ENCODE measurements at regions of chr3 and their contacts with region 1.

Region 1: DNA sequence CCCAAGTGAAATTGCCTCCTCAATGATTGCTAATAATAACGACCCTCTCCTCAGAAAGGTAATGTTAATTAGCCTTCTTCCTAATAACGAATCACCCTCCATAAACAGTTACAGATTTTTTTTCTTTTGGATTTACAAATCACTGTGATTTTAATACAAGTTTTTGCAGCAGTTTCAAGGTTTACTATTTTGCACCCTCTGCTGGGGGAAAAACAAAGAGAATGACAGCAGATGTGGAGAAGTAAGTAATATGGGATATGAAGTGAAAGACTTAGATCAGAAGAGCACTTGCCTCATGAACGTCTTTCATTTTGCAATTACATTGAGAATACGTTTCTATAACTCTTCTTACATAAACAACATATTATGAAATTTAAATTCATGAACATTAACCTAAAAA is 16.1 kb upstream of the CNTN3 start:
- DNase-seq: peak; percentile 59
- ATAC-seq: peak; percentile 47; the same call in 1 of the 2 replicates
- H3K4me3 ChIP-seq: no peak overlapping the region
- H3K27ac ChIP-seq: no peak overlapping the region
- H3K4me1 ChIP-seq: peaks cover 4% of the 10 kb centered on the region; the same call in 1 of the 2 replicates
- H3K27me3 ChIP-seq: no peaks in the 10 kb centered on the region
- CTCF ChIP-seq: peak; percentile 55
- POLR2A ChIP-seq: no peak
- RAD21 ChIP-seq: peak; percentile 54

Region 2: DNA sequence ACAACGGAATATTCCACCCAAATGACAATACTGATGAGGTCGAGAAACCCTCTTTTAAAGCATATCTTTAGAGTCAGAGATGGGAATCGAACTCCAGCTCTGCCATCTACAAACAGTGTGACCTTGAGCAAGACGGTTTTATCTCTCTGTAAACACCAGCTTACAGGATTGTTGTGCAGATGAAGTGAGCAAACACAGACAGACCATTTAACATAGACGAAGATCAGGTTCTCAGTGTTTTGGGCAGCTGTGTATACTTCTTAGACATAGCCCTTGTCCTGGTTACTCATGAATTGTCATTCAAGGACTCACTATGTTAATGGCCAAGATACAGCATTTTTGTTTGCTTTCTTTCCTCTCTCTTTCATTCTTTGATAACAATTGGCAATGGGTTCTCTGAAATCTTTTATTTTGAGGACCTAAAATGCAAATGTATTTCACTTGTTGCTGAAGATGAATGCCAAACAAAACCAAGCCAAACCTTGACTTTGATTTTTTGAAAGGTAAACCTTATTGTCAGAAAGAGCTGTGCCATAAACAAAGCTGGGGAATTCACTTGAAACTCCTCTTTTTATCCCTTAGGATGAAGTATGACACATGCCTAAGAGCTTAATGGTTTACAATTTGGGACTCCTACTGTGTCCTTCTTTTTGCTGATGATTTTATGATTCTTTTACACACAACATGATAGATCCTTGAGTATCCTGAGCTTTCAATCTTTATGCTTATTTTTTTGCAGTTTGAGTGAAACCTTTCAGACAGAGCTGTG is 755.8 kb before region 1 on chr3:
- CTCF ChIA-PET with region 1: no interaction called
- POLR2A ChIA-PET with region 1: no interaction called
- dilution Hi-C with region 1: no loop called
- in situ Hi-C with region 1: no loop called
- intact Hi-C with region 1: loop called (anchors 5 kb)
- DNase-seq: no peak
- ATAC-seq: no peak
- H3K4me3 ChIP-seq: no peak overlapping the region
- H3K27ac ChIP-seq: no peak overlapping the region
- H3K4me1 ChIP-seq: no peaks in the 10 kb centered on the region
- H3K27me3 ChIP-seq: peaks cover 1% of the 10 kb centered on the region; the same call in 1 of the 2 replicates
- CTCF ChIP-seq: no peak
- POLR2A ChIP-seq: no peak
- RAD21 ChIP-seq: no peak

Region 3: DNA sequence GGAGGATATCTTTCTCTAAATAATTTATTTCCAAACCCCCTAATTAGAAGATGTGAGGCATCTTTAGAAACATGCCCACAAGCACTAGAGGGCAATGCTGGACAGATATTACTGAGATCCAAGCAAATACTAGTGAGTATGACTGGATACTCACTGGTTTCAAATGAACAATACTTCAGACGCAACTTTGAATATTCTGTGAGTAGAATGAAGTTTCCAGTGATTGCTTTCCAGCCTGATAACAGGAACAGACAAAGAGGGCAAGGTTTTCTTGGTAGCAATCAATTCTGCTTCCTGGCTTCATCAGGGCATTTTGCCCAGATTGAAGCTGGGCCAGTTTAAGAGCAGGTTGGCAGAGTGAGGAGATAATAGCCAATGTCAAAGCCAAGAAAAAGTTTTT is 563.3 kb before region 1 on chr3:
- CTCF ChIA-PET with region 1: no interaction called
- POLR2A ChIA-PET with region 1: no interaction called
- dilution Hi-C with region 1: no loop called
- in situ Hi-C with region 1: no loop called
- intact Hi-C with region 1: loop called (anchors 2 kb)
- DNase-seq: peak; percentile 32
- ATAC-seq: peak; percentile 86
- H3K4me3 ChIP-seq: no peak overlapping the region
- H3K27ac ChIP-seq: no peak overlapping the region
- H3K4me1 ChIP-seq: no peaks in the 10 kb centered on the region
- H3K27me3 ChIP-seq: no peaks in the 10 kb centered on the region
- CTCF ChIP-seq: peak; percentile 55
- POLR2A ChIP-seq: no peak
- RAD21 ChIP-seq: peak; percentile 62

Region 4: GRCh38 chr3:74267588-74268184 is 362.9 kb before region 1 on chr3:
- CTCF ChIA-PET with region 1: no interaction called
- POLR2A ChIA-PET with region 1: no interaction called
- dilution Hi-C with region 1: no loop called
- in situ Hi-C with region 1: no loop called
- intact Hi-C with region 1: loop called (anchors 5 kb)
- DNase-seq: peak; percentile 63
- ATAC-seq: peak; percentile 81
- H3K4me3 ChIP-seq: no peak overlapping the region
- H3K27ac ChIP-seq: no peak overlapping the region
- H3K4me1 ChIP-seq: no peaks in the 10 kb centered on the region; the same call in 1 of the 2 replicates
- H3K27me3 ChIP-seq: no peaks in the 10 kb centered on the region
- CTCF ChIP-seq: peak; percentile 63
- POLR2A ChIP-seq: no peak
- RAD21 ChIP-seq: peak; percentile 60

Region 5: DNA sequence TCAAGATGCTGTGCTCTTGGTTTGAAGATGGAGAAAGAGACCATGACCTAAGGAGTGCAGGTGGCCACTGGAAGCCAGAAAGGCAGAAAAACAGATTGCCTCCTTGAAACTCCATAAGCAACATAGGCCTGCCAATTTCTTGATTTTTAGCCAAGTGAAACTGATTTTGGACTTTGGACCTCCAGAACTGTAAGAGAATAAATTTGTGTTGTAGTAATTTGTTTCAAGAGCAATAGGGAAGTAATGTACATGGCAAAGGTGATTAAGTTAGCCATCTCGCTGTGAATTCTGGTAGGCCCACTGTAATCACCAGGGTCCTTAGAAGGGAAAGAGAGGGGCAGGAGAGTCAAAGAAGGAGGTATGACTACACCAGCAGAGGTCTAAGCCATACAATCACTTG is 254.9 kb before region 1 on chr3:
- CTCF ChIA-PET with region 1: no interaction called
- POLR2A ChIA-PET with region 1: no interaction called
- dilution Hi-C with region 1: no loop called
- in situ Hi-C with region 1: no loop called
- intact Hi-C with region 1: loop called (anchors 1 kb)
- DNase-seq: no peak
- ATAC-seq: no peak
- H3K4me3 ChIP-seq: no peak overlapping the region
- H3K27ac ChIP-seq: no peak overlapping the region
- H3K4me1 ChIP-seq: no peaks in the 10 kb centered on the region
- H3K27me3 ChIP-seq: no peaks in the 10 kb centered on the region
- CTCF ChIP-seq: no peak
- POLR2A ChIP-seq: no peak
- RAD21 ChIP-seq: no peak

Region 6: DNA sequence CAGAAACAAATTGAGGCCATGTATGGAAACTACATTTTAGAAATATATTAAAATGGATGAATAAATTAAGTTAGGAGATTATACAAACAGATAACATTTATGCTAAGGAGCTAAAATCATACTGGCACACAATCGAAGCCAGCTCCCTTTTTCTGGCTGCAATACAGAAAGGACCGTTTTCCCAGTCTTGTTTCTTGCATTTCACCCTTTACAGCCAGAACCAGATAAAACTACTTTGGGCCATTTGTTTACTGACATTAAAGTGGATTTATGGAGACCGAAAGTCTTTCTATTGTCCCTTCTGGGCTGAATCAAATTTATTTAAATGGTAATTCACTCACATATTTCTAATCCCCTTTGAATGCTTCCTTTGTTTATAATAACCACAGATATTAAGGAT is 34.0 kb after region 1 on chr3:
- CTCF ChIA-PET with region 1: no interaction called
- POLR2A ChIA-PET with region 1: no interaction called
- dilution Hi-C with region 1: no loop called
- in situ Hi-C with region 1: no loop called
- intact Hi-C with region 1: no loop called
- DNase-seq: no peak
- ATAC-seq: no peak
- H3K4me3 ChIP-seq: no peak overlapping the region
- H3K27ac ChIP-seq: no peak overlapping the region
- H3K4me1 ChIP-seq: no peaks in the 10 kb centered on the region
- H3K27me3 ChIP-seq: no peaks in the 10 kb centered on the region
- CTCF ChIP-seq: no peak
- POLR2A ChIP-seq: no peak
- RAD21 ChIP-seq: no peak

Region 7: GRCh38 chr3:74693696-74694393 is 63.2 kb after region 1 on chr3:
- CTCF ChIA-PET with region 1: no interaction called
- POLR2A ChIA-PET with region 1: no interaction called
- dilution Hi-C with region 1: no loop called
- in situ Hi-C with region 1: no loop called
- intact Hi-C with region 1: no loop called
- DNase-seq: no peak
- ATAC-seq: no peak
- H3K4me3 ChIP-seq: no peak overlapping the region
- H3K27ac ChIP-seq: no peak overlapping the region
- H3K4me1 ChIP-seq: no peaks in the 10 kb centered on the region
- H3K27me3 ChIP-seq: no peaks in the 10 kb centered on the region
- CTCF ChIP-seq: no peak
- POLR2A ChIP-seq: no peak
- RAD21 ChIP-seq: no peak

Measured in IMR-90 (cell line).